Activated CD4-positive, alpha-beta T cell treated with anti-CD3 and anti-CD28 coated beads, Interleukin-2, amount 10 ng/mL, durations not matched to agents 24 days and 14 days (primary cell): ENCODE measurements at regions of chr22 and their contacts with region 1.

Region 1: GRCh38 chr22:21952586-21953571 is at the start of gene PPM1F:
- DNase-seq: peak; percentile 97
- H3K4me3 Mint-ChIP-seq: peak within 1 kb of the TSS; percentile 92
- H3K27ac Mint-ChIP-seq: peak within 1 kb of the TSS; percentile 73
- H3K4me1 Mint-ChIP-seq: peaks cover 12% of the 10 kb centered on the region
- H3K27me3 Mint-ChIP-seq: no peaks in the 10 kb centered on the region
- total RNA-seq, gene PPM1F: 31.0 and 40.1 TPM in 2 replicates

Region 2: GRCh38 chr22:21712894-21713712 is 239.8 kb before region 1 on chr22:
- intact Hi-C with region 1: loop called (anchors 1 kb)
- DNase-seq: peak; percentile 85
- H3K4me3 Mint-ChIP-seq: no peak overlapping the region
- H3K27ac Mint-ChIP-seq: no peak overlapping the region
- H3K4me1 Mint-ChIP-seq: peaks cover 4% of the 10 kb centered on the region
- H3K27me3 Mint-ChIP-seq: peaks cover 4% of the 10 kb centered on the region

Region 3: GRCh38 chr22:21876486-21877176 is 76.2 kb before region 1 on chr22:
- intact Hi-C with region 1: no loop called
- DNase-seq: peak; percentile 64
- H3K4me3 Mint-ChIP-seq: no peak overlapping the region
- H3K27ac Mint-ChIP-seq: peak overlapping the region; percentile 90
- H3K4me1 Mint-ChIP-seq: peaks cover 11% of the 10 kb centered on the region
- H3K27me3 Mint-ChIP-seq: peaks cover 8% of the 10 kb centered on the region

Region 4: GRCh38 chr22:21938071-21938822 is 14.6 kb before region 1 on chr22:
- intact Hi-C with region 1: loop called (anchors 1 kb)
- DNase-seq: peak; percentile 97
- H3K4me3 Mint-ChIP-seq: peak overlapping the region; percentile 82
- H3K27ac Mint-ChIP-seq: peak overlapping the region; percentile 81
- H3K4me1 Mint-ChIP-seq: peaks cover 46% of the 10 kb centered on the region
- H3K27me3 Mint-ChIP-seq: no peaks in the 10 kb centered on the region